AG04450 (cell line): ENCODE measurements at regions of chr12 and their contacts with region 1.

Region 1: GRCh38 chr12:121793838-121794533 is 498 bp upstream of the RHOF start:
- DNase-seq: peak; percentile 77
- H3K4me3 ChIP-seq: peak overlapping the region; percentile 65
- H3K27ac ChIP-seq: peak overlapping the region; percentile 89
- H3K27me3 ChIP-seq: no peaks in the 10 kb centered on the region
- CTCF ChIP-seq: peak; percentile 100

Region 2: DNA sequence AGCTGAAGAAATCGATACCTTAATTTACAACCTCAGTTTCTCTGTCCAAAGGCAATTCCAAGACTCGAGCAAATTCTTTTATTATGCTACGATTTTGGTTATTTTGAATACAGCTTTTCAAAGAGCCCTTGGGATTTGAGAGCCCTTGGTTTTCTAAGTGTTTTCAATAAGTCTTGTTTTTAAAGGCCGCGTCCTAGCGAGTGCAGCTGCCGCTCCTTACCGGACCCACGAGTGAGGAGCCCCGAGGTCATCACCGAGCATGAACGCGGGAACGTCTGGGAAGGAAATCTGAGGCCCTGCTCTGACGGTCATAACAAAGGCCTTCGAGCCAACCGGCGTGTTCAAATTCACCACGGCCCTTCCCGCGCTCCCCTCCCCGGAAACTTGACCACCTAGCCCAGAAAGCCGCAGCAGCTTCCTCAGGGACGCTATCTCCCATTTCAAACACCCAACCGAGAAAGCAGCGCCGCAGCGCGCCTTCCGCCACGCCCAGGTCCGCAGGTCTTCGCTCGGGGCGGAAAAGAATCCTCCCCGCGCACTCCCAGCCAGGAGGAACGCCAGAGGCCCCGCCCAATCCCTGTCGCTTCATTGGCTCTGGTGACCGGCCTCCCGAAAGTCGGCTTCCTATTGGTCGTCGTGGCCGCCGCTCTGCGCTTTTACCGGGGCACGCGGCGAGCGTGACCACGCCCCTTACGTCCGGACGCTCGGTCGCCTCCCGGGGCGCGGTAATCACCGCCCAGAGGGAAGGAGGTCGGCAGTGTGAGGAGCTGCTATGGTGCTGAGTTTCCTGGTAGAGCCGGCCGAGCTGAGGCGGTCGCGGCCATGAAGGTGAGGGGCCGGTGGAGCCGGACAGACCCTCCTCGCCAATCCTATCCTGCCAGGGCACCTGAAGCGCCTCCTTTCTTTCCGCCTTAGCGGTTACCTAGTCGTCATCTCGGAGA is 394.3 kb before region 1 on chr12 and contains the start of gene RNF34:
- CTCF ChIA-PET with region 1: no interaction called
- POLR2A ChIA-PET with region 1: no interaction called
- DNase-seq: peak; percentile 94
- H3K4me3 ChIP-seq: peak within 1 kb of the TSS; percentile 86
- H3K27ac ChIP-seq: peak within 1 kb of the TSS; percentile 85
- H3K27me3 ChIP-seq: no peaks in the 10 kb centered on the region
- CTCF ChIP-seq: no peak
- polyA plus RNA-seq, gene RNF34: 47.4 and 55.3 TPM in 2 replicates

Region 3: GRCh38 chr12:121748571-121749253 is 45.3 kb before region 1 on chr12:
- CTCF ChIA-PET with region 1: interaction called, 14 read pairs
- POLR2A ChIA-PET with region 1: no interaction called
- DNase-seq: peak; percentile 71
- H3K4me3 ChIP-seq: no peak overlapping the region
- H3K27ac ChIP-seq: peak overlapping the region; percentile 89
- H3K27me3 ChIP-seq: no peaks in the 10 kb centered on the region
- CTCF ChIP-seq: no peak

Region 4: DNA sequence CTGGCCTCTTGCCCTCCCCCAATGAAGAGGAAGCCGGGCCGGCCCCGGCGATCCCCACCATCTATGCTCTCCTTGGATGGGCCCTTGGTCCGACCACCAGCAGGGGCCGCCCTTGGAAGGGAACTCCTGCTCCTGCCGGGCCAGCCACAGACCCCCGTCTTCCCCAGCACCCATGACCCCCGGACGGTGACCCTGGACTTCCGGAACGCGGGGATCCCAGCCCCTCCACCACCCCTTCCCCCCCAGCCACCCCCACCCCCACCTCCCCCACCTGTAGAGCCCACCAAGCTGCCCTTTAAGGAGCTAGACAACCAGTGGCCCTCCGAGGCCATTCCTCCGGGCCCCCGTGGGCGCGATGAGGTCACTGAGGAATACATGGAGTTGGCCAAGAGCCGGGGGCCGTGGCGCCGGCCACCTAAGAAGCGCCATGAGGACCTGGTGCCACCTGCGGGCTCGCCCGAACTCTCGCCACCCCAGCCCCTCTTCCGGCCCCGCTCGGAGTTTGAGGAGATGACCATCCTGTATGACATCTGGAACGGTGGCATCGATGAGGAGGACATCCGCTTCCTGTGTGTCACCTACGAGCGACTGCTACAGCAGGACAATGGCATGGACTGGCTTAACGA is 29.2 kb after region 1 on chr12:
- CTCF ChIA-PET with region 1: interaction called, 15 read pairs
- POLR2A ChIA-PET with region 1: interaction called, 3 read pairs
- DNase-seq: no peak
- H3K4me3 ChIP-seq: no peak overlapping the region
- H3K27ac ChIP-seq: no peak overlapping the region
- H3K27me3 ChIP-seq: no peaks in the 10 kb centered on the region
- CTCF ChIP-seq: peak; percentile 11; the same call in 1 of the 2 replicates

Region 5: GRCh38 chr12:121872546-121873215 is 78.7 kb after region 1 on chr12:
- CTCF ChIA-PET with region 1: interaction called, 10 read pairs
- POLR2A ChIA-PET with region 1: interaction called, 4 read pairs
- DNase-seq: peak; percentile 98
- H3K4me3 ChIP-seq: peak overlapping the region; percentile 27
- H3K27ac ChIP-seq: peak overlapping the region; percentile 97
- H3K27me3 ChIP-seq: no peaks in the 10 kb centered on the region
- CTCF ChIP-seq: no peak

Region 6: DNA sequence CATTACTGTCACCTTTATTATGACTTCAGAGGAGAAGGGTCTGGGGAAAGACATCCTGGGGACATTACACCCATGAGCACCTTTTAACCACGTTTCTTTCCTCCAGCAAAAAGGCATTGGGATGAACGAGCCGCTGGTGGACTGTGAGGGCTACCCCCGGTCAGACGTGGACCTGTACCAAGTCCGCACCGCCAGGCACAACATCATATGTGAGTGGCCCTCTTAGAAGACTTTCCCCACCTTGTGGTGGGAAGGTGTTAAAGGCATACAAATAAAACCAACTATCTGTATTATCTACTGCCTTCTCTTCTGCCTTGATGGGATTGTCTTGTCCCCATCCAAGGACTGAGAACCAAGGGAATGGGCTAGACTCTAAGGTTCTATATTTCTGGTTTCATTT is 100.6 kb after region 1 on chr12:
- CTCF ChIA-PET with region 1: interaction called, 111 read pairs
- POLR2A ChIA-PET with region 1: interaction called, 11 read pairs
- DNase-seq: no peak
- H3K4me3 ChIP-seq: no peak overlapping the region
- H3K27ac ChIP-seq: peak overlapping the region; percentile 68
- H3K27me3 ChIP-seq: no peaks in the 10 kb centered on the region
- CTCF ChIP-seq: peak; percentile 44

Region 7: GRCh38 chr12:122282066-122282465 is 488.1 kb after region 1 on chr12:
- CTCF ChIA-PET with region 1: no interaction called
- POLR2A ChIA-PET with region 1: no interaction called
- DNase-seq: peak; percentile 45
- H3K4me3 ChIP-seq: no peak overlapping the region
- H3K27ac ChIP-seq: peak overlapping the region; percentile 54
- H3K27me3 ChIP-seq: no peaks in the 10 kb centered on the region
- CTCF ChIP-seq: 0 out of 2 replicates have a peak, but pooled peaks have one; percentile 7